ENCODE measurements at regions of chr17 and their contacts with region 1.

Region 1: DNA sequence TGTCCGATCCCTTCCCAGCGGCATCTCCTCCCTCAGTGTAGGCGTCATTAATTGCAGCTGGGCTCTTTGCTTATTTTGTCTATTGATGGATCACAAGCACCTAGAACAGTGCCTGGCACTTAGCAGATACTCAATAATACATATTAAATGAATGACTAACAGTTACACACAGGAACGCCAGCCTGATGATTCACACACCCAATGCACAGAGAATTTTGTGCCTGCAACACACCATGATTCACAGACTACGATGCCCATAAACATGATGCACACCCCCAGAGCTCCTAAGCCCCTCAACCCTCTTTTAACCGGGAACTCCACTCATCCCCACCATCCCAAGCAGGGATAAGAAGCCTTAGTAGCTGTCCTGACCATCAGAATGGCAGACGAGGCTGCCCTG is 66.6 kb upstream of the TMEM97 start:
- DNase-seq: no peak
- H3K4me3 ChIP-seq: no peak overlapping the region
- H3K27ac ChIP-seq: no peak overlapping the region
- H3K4me1 ChIP-seq: peaks cover 0 to 4% of the 10 kb centered on the region in 2 donors
- H3K27me3 ChIP-seq: no peaks in the 10 kb centered on the region
- CTCF ChIP-seq: no peak
- POLR2A ChIP-seq: no peak

Region 2: DNA sequence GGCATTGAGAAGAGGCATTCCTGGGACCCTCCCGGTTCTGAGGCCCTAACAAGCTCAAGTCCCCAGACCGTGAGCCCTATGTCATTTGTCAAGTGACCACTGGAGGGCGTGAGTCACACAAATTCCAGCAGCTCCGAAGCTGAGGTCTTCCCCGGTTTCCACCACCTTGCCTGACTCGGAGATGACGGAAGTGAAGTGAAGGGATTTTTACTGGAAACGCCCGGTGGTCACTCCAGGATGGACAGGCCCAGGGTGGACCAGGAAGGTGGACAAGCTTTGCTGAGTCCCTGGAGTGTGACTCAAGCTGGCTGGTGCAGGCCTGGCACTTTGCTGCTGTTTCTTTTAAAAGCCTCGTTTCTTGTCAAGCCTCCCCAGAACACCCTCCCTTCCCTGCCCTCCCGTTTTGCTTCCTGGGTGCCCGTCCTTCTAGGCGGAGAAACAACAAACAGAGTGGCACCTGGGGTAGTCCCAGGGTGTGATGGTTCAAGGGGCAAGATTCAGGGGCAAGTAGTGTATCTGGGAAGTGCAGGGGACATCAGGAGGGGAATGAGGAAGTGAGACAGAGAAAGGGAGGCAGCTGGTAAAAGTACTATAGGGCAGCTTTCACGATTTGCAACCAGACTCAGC is 446.8 kb before region 1 on chr17:
- intact Hi-C with region 1: loop called (anchors 10 kb)
- DNase-seq: peak; percentile 85 to 96 (median 88)
- H3K4me3 ChIP-seq: peak overlapping the region in 1 of 4 donors; percentile 51
- H3K27ac ChIP-seq: peak overlapping the region in 1 of 5 donors; percentile 81
- H3K4me1 ChIP-seq: no peaks in the 10 kb centered on the region
- H3K27me3 ChIP-seq: no peaks in the 10 kb centered on the region
- CTCF ChIP-seq: peak; percentile 61 to 93 (median 88)
- POLR2A ChIP-seq: no peak

Region 3: GRCh38 chr17:27892866-27893769 is 359.3 kb before region 1 on chr17 and contains the start of gene LYRM9:
- intact Hi-C with region 1: loop called (anchors 5 to 10 kb)
- DNase-seq: peak; percentile 89 to 94 (median 91)
- H3K4me3 ChIP-seq: peak within 1 kb of the TSS; percentile 52 to 92 (median 86)
- H3K27ac ChIP-seq: peak within 1 kb of the TSS; percentile 71 to 97 (median 95)
- H3K4me1 ChIP-seq: peaks cover 24 to 46% of the 10 kb centered on the region in 2 donors
- H3K27me3 ChIP-seq: no peaks in the 10 kb centered on the region
- CTCF ChIP-seq: peak; percentile 45 to 98 (median 84)
- POLR2A ChIP-seq: peak; percentile 61 to 81
- total RNA-seq, gene LYRM9: 24.8 to 116 (median 35.7) TPM

Region 4: DNA sequence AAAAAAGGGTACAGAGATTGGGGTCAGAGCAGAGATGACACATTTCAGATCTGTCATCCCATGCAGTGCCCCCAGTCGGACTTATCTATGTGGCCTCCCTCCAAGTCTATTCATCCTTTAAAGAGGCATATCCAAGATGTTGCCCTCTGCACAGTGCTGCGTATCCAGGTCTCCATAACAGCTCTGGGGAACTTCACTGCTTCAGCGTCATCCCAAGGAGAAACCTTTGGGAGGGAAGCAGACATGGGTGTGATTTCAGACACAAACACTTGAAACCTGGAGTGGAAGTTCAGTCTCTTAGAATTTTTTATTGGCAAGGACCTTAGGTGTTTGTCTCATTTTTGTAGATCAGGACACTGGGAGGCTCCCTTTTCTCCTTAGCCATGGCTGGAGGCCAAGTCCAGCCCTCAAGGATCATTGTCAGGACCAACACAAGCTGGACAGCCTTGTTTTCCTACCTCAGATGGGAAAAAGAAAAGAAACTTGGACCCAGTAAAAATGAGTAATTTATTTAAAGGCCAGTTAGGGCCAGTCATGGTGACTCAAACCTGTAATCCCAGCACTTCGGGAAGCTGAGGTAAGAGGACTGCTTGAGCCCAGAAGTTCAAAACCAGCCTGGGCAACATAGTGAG is 233.9 kb before region 1 on chr17:
- intact Hi-C with region 1: loop called in 1 of 2 experiments (anchors 10 kb)
- DNase-seq: peak; percentile 68 to 87 (median 80)
- H3K4me3 ChIP-seq: no peak overlapping the region
- H3K27ac ChIP-seq: peak overlapping the region in 2 of 5 donors; percentile 24 to 57
- H3K4me1 ChIP-seq: peaks cover 0 to 3% of the 10 kb centered on the region in 2 donors
- H3K27me3 ChIP-seq: no peaks in the 10 kb centered on the region
- CTCF ChIP-seq: no peak
- POLR2A ChIP-seq: no peak

Region 5: GRCh38 chr17:28398280-28398981 is 146.0 kb after region 1 on chr17:
- intact Hi-C with region 1: no loop called
- DNase-seq: peak in 5 of 7 donors; percentile 53 to 78 (median 66)
- H3K4me3 ChIP-seq: no peak overlapping the region
- H3K27ac ChIP-seq: peak overlapping the region; percentile 20 to 77 (median 42)
- H3K4me1 ChIP-seq: peaks cover 22 to 40% of the 10 kb centered on the region in 2 donors
- H3K27me3 ChIP-seq: no peaks in the 10 kb centered on the region
- CTCF ChIP-seq: no peak
- POLR2A ChIP-seq: peak in 1 of 2 donors; percentile 23